ENCODE measurements at regions of chr22 and their contacts with region 1.

Region 1: DNA sequence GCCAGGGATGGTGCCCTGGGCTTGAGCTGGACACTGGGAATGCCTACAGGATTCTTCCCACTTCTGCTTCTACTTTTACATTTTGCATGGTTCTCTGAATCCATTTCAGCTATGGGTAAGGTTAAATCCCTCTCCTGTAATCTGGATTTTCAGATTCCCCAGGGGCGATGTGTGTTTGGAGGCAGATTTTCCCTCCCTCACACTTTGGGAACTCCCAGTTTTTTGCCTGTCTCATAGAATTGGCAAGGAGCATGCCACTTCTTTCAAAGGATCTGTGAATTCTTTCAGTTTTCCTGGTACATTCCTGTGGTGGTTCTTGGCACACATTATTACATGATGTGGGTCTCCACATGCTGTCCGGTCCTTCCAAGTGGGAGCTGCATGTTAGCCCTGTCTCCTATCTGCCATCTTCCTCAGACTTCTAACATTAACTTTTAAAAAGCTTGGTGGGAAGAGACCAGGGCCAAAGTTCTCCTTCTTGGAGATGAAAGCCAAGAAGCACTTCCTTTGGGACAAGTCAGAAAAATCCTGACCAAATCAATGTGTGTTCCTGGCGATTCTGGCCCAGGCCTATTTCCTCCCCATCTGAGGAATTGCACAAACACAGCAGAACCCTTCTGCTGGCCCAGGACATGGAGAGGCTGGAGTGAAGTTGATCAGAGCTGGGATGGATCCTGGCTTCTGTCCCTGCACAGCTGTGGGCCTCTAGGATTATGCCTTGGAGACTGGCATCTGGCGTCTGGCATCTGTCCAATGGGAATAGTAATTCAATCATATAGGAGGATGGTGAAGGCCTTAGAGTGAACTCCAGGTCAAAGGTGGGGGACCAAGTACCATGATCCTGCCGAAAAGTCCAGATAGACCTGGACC is 5.4 kb upstream of the APOL2 start:
- DNase-seq: peak; percentile 57 to 77
- ATAC-seq: peak in 3 of 4 donors; percentile 63 to 72 (median 64)
- H3K4me3 ChIP-seq: no peak overlapping the region
- H3K27ac ChIP-seq: peak overlapping the region; percentile 50
- H3K4me1 ChIP-seq: peaks cover 24% of the 10 kb centered on the region
- H3K27me3 ChIP-seq: no peaks in the 10 kb centered on the region
- CTCF ChIP-seq: no peak

Region 2: DNA sequence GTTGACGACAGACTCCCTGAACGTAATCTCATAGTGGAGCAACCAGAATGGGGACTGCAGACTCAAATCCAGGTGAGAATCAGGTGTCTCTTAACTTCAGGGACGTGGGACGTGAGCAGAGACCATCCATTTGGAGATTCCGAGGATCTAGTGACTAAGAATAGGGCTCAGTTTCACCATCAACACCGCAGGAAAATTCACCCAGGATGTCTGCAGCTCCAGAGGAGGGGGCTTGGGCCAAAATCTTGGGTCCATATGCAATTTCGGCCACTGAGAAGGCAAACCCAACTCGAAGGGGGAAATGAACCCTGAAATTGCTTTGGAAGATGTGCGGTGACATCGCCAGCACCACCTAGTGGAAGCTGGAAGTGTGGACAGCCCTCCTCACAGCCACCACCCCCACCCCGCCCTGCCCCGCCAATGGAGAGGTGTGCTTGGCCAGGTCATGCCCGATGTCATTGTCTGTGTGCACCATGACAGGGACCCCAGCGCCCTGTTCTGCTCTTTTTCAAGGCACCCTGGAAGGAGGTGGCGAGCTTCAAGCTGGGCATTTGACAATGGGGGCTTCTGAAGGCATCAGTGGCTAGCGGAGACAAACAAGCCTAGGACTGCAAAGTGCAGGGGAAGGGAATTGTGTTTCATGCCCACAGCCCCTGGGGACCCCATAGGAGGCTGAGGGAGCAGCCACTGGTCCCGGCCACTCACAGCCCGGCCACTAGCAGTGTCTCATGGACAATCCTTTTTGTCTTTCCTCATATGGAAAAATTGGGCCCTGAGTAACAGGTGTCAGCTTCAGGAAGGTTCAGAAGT is 32.9 kb after region 1 on chr22:
- intact Hi-C with region 1: loop called in 1 of 2 experiments (anchors 5 kb)
- DNase-seq: peak; percentile 58 to 74
- ATAC-seq: peak; percentile 66 to 83 (median 75)
- H3K4me3 ChIP-seq: no peak overlapping the region
- H3K27ac ChIP-seq: no peak overlapping the region
- H3K4me1 ChIP-seq: no peaks in the 10 kb centered on the region
- H3K27me3 ChIP-seq: no peaks in the 10 kb centered on the region
- CTCF ChIP-seq: peak; percentile 72

Measured in psoas muscle (tissue), 8 donors.